ENCODE measurements at regions of chrX and their contacts with region 1.

Region 1: DNA sequence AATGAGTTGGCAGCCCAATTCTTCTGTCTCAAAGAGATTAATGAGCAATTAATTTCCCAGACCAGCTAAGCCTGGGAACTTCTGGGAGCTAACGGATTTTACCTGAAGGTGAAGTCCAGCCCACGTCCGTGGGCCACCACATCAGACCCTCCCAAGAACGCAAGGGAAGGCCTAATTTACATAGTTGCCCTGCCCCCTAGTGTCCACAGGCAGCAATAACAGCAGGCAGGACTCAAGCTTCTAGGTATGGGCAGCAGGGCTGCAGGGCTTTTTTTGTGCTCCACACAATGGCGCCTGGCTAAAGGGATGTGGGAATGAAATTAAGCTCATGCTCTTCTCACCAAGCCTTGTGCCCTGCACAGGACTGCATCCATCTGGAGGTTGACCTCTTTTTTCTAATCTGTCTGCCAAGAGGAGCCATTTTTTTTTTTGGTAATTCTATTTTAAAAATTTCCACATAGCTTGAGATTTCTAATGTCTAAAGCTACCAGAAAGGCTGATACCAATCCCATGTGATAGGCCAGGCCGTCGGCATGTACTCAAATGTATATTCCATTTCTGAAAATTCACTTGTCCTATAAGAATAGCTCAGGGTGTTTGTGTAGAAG is 111.9 kb upstream of the TMEM164 start:
- DNase-seq: peak; percentile 56
- H3K4me3 Mint-ChIP-seq: no peak overlapping the region
- H3K27ac Mint-ChIP-seq: no peak overlapping the region
- H3K4me1 Mint-ChIP-seq: no peaks in the 10 kb centered on the region
- H3K27me3 Mint-ChIP-seq: peaks cover 7% of the 10 kb centered on the region

Region 2: DNA sequence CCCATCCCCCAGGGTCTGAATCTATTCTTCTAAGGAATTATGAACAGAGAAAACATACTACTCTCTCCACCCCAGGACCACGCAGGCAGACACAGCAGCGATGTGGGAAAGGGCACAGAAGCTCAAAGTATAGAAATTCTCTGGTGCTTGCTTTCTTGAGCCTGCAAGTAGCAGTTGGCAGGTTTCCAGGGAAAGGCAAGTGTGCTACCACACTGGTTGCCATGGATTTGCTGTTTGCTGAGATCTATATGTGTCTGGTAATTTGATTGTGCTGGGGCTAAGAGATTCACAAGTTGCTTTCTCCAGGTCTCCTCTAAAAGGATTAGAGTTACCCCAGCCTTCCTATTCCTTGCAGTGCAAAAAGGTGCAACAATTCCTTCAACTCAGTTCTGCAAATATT is 492.2 kb before region 1 on chrX:
- CTCF ChIA-PET with region 1: no interaction called
- DNase-seq: no peak
- H3K4me3 Mint-ChIP-seq: no peak overlapping the region
- H3K27ac Mint-ChIP-seq: no peak overlapping the region
- H3K4me1 Mint-ChIP-seq: no peaks in the 10 kb centered on the region
- H3K27me3 Mint-ChIP-seq: no peaks in the 10 kb centered on the region

Region 3: DNA sequence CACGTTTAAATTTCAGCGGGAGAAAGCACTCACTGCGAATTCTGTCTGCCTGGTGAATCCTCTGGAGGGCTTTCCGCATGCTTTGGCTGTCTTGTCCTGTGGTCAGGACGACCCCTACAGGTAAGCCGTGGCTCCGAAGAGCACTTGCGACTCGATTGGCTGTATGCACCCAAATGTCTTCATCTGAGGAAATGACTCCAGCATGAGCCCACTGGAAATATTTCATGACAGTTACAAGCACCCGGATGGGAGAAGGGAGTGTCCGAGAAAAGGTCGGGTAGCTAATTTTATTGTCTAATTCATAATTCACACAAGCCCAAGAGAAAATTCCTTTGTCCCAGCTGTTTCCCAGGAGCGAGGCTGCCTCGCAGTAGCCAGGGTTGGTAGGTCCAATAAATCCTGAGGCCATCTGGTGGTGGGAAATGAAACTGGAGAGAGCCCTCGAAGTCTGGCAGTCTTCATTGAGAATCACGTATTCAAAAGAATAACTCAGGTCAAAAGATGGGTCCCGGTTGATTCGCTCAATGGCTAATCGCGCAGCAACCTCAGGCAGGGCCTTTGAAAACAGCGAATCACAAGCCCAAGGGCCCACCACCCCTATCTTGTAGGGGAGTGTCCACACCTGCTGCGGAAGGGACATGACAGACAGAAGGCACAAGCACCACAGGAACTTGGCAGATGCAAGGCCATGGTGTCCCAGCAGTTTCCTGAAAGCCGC is 415.7 kb before region 1 on chrX:
- CTCF ChIA-PET with region 1: interaction called, 15 read pairs
- DNase-seq: no peak
- H3K4me3 Mint-ChIP-seq: no peak overlapping the region
- H3K27ac Mint-ChIP-seq: no peak overlapping the region
- H3K4me1 Mint-ChIP-seq: peaks cover 2% of the 10 kb centered on the region
- H3K27me3 Mint-ChIP-seq: no peaks in the 10 kb centered on the region

Region 4: GRCh38 chrX:109485470-109486340 is 405.3 kb before region 1 on chrX:
- CTCF ChIA-PET with region 1: interaction called, 22 read pairs
- DNase-seq: peak; percentile 68
- H3K4me3 Mint-ChIP-seq: no peak overlapping the region
- H3K27ac Mint-ChIP-seq: no peak overlapping the region
- H3K4me1 Mint-ChIP-seq: no peaks in the 10 kb centered on the region
- H3K27me3 Mint-ChIP-seq: peaks cover 4% of the 10 kb centered on the region

Region 5: DNA sequence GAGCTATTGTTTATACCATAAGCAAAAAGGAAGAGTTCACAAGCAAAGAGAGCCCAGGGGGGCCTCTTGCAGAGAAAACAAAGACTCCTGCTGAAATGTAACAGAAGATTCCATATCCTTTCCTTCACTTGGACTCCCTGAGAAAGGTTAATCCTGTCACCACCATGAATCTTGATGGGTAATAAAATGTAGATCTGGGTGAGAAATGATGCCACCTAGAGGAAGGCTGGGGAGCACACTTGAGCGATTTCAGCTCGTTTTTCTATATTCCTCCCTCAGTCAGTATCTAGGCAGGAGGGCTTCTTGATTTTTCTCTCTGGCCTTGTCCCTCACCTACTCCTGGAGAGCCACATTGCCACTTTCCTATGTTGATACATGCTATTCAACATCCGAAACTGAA is 255.8 kb before region 1 on chrX:
- CTCF ChIA-PET with region 1: interaction called, 11 read pairs
- DNase-seq: peak; percentile 20
- H3K4me3 Mint-ChIP-seq: no peak overlapping the region
- H3K27ac Mint-ChIP-seq: no peak overlapping the region
- H3K4me1 Mint-ChIP-seq: peaks cover 27% of the 10 kb centered on the region
- H3K27me3 Mint-ChIP-seq: no peaks in the 10 kb centered on the region

Region 6: GRCh38 chrX:109709129-109709631 is 181.8 kb before region 1 on chrX:
- CTCF ChIA-PET with region 1: interaction called, 11 read pairs
- DNase-seq: no peak
- H3K4me3 Mint-ChIP-seq: no peak overlapping the region
- H3K27ac Mint-ChIP-seq: peak overlapping the region; percentile 79
- H3K4me1 Mint-ChIP-seq: peaks cover 55% of the 10 kb centered on the region
- H3K27me3 Mint-ChIP-seq: no peaks in the 10 kb centered on the region

Region 7: DNA sequence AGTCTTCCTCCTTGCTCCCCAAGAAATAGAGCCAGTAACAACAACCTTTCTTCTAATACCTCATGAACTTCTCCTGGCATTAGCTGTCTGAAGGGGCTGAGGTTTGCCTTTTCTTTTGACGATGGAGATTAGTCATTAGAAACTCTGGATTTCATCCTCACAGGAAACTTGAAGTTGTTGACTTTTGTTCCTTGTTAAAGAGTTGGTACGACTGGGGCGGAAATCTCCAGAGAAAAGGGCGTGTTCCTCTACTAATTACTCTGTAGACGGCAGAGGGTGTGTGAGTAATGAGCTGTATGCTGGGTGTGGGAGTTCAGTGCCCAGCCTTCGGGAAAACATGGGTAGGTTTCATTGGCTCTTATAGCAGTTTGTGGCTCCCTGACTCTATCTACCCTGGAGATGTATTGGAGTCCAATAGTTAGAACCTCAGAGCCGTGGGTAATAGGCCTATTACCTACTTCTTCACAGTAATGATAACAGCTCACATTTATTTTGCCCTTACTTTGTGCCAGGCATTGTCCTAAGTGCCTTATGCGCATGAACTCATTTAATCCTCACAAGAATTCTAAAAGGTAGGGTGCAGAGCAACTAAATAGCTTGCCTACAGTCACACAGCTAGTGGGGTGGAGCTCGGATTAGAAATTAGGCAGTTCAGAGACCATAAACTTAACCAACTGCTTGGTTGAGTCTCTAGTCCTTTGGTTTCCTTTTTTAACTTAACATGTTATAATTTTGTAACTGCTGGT is 135.3 kb after region 1 on chrX:
- CTCF ChIA-PET with region 1: no interaction called
- DNase-seq: no peak
- H3K4me3 Mint-ChIP-seq: no peak overlapping the region
- H3K27ac Mint-ChIP-seq: no peak overlapping the region
- H3K4me1 Mint-ChIP-seq: peaks cover 2% of the 10 kb centered on the region
- H3K27me3 Mint-ChIP-seq: no peaks in the 10 kb centered on the region

Region 8: GRCh38 chrX:110146521-110146920 is 255.5 kb after region 1 on chrX:
- CTCF ChIA-PET with region 1: interaction called, 15 read pairs
- DNase-seq: peak; percentile 42
- H3K4me3 Mint-ChIP-seq: no peak overlapping the region
- H3K27ac Mint-ChIP-seq: no peak overlapping the region
- H3K4me1 Mint-ChIP-seq: no peaks in the 10 kb centered on the region
- H3K27me3 Mint-ChIP-seq: no peaks in the 10 kb centered on the region

Measured in activated naive CD4-positive, alpha-beta T cell treated with anti-CD3 and anti-CD28 coated beads, Interleukin-2, amount 10 ng/mL, durations not matched to agents 7 days and 5 days (primary cell).